ENCODE measurements at regions of chr13 and their contacts with region 1.

Region 1: GRCh38 chr13:51444922-51445321 is 7.9 kb downstream of the INTS6 start:
- DNase-seq: no peak
- H3K4me3 ChIP-seq: no peak overlapping the region
- H3K27ac ChIP-seq: no peak overlapping the region
- H3K4me1 ChIP-seq: peaks cover 2% of the 10 kb centered on the region
- CTCF ChIP-seq: peak; percentile 67

Region 2: DNA sequence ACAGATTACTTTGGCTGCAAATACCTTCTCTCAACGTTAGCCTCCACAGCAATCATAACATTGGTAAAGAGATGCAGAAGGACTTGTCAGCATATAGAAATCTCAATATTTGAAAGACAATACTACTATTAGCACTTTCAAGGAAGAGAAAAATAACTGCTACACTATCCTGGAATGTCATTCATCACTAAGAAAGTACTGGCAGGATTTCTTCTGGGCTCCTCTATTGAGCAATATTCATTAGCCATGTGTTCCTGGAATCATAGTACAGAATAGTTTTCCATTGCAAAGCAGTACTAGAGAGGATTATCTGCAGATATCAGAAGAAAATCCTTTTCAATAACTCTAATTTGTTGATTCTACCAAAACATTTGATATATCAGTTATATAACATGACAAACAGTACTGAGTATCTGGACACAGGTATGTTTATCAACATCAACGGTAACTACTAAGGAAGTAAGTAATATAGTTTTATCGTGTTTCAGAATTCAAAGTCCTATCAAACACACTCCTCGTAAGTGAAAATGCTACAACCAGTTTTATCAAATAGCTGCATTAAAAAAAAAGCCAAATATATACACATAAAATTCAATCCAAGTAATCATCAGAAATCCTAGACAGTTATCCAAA is 19.4 kb before region 1 on chr13:
- CTCF ChIA-PET with region 1: no interaction called
- POLR2A ChIA-PET with region 1: interaction called, 23 read pairs
- intact Hi-C with region 1: no loop called
- DNase-seq: no peak
- H3K4me3 ChIP-seq: no peak overlapping the region
- H3K27ac ChIP-seq: no peak overlapping the region
- H3K4me1 ChIP-seq: peaks cover 37% of the 10 kb centered on the region
- CTCF ChIP-seq: no peak

Region 3: GRCh38 chr13:51663973-51664957 is 219.3 kb after region 1 on chr13:
- CTCF ChIA-PET with region 1: no interaction called
- POLR2A ChIA-PET with region 1: no interaction called
- intact Hi-C with region 1: no loop called
- DNase-seq: no peak
- H3K4me3 ChIP-seq: no peak overlapping the region
- H3K27ac ChIP-seq: no peak overlapping the region
- H3K4me1 ChIP-seq: no peaks in the 10 kb centered on the region
- CTCF ChIP-seq: no peak

Region 4: GRCh38 chr13:51844862-51845573 is 400.1 kb after region 1 on chr13 and contains the start of gene TMEM272:
- CTCF ChIA-PET with region 1: no interaction called
- POLR2A ChIA-PET with region 1: no interaction called
- intact Hi-C with region 1: no loop called
- DNase-seq: peak; percentile 41
- H3K4me3 ChIP-seq: no peak within 1 kb of the TSS
- H3K27ac ChIP-seq: no peak within 1 kb of the TSS
- H3K4me1 ChIP-seq: peaks cover 3% of the 10 kb centered on the region
- CTCF ChIP-seq: peak; percentile 92
- total RNA-seq, gene TMEM272: 0.41 and 0.75 TPM in 2 replicates

Measured in OCI-LY7 (cell line).